Transverse colon (tissue), 4 donors: ENCODE measurements at regions of chr11 and their contacts with region 1.

Region 1: DNA sequence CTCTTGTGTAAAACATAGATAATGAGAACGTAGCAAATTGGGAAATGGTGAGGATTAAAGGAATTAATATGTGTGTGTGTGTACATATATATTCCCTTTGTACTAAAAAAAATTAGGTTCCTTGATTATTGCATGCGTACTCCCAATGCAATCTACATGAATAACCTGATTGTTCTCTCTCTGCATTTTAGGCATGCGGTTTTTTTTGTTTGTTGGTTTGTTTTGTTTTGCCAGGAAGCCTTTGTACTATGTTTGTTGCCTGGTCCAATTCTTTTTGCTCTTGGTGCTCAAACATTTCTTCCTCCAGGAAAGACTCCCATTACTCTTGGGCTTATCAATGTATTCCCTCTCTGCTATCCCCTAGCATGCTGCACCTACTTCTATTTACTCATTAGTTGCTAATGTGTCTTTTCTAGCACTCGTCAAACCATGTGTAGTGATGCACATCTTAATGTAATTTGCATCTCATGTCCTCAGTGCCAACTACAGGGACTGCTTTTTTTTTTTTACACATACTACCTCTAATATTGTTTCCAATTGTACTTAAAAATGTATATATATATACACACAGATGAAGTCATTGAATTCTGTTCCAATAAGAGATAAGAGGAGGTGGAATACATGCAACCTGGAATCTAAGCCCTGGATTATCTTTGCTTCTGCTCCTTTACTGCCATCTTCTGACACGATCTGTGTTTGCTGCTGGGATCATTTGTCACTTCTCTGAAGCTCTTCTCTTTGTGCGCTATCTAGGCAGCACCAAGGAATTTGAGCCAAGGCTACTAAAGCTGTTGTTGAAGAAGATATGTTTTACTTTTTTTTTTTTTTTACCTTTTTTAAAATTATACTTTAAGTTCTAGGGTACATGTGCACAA is 197.2 kb upstream of the ANO3 start:
- DNase-seq: no peak
- H3K4me3 ChIP-seq: no peak overlapping the region
- H3K27ac ChIP-seq: no peak overlapping the region
- H3K4me1 ChIP-seq: no peaks in the 10 kb centered on the region
- H3K27me3 ChIP-seq: no peaks in the 10 kb centered on the region
- CTCF ChIP-seq: no peak
- EP300 ChIP-seq: no peak
- POLR2A ChIP-seq: no peak

Region 2: GRCh38 chr11:26028294-26028954 is 106.3 kb before region 1 on chr11:
- in situ Hi-C with region 1: no loop called
- intact Hi-C with region 1: no loop called
- DNase-seq: no peak
- H3K4me3 ChIP-seq: no peak overlapping the region
- H3K27ac ChIP-seq: no peak overlapping the region
- H3K4me1 ChIP-seq: no peaks in the 10 kb centered on the region
- H3K27me3 ChIP-seq: no peaks in the 10 kb centered on the region
- CTCF ChIP-seq: no peak
- EP300 ChIP-seq: no peak
- POLR2A ChIP-seq: no peak

Region 3: GRCh38 chr11:26112190-26112715 is 22.5 kb before region 1 on chr11:
- in situ Hi-C with region 1: no loop called
- intact Hi-C with region 1: no loop called
- DNase-seq: no peak
- H3K4me3 ChIP-seq: no peak overlapping the region
- H3K27ac ChIP-seq: no peak overlapping the region
- H3K4me1 ChIP-seq: no peaks in the 10 kb centered on the region
- H3K27me3 ChIP-seq: no peaks in the 10 kb centered on the region
- CTCF ChIP-seq: no peak
- EP300 ChIP-seq: no peak
- POLR2A ChIP-seq: no peak

Region 4: GRCh38 chr11:26227296-26227695 is 92.6 kb after region 1 on chr11:
- in situ Hi-C with region 1: loop called in 1 of 4 experiments (anchors 25 kb)
- intact Hi-C with region 1: no loop called
- DNase-seq: no peak
- H3K4me3 ChIP-seq: no peak overlapping the region
- H3K27ac ChIP-seq: no peak overlapping the region
- H3K4me1 ChIP-seq: no peaks in the 10 kb centered on the region
- H3K27me3 ChIP-seq: no peaks in the 10 kb centered on the region
- CTCF ChIP-seq: peak in 3 of 5 experiments; percentile 20 to 31 (median 23)
- EP300 ChIP-seq: no peak
- POLR2A ChIP-seq: no peak